SK-N-SH (cell line): ENCODE measurements at regions of chr3 and their contacts with region 1.

Region 1: DNA sequence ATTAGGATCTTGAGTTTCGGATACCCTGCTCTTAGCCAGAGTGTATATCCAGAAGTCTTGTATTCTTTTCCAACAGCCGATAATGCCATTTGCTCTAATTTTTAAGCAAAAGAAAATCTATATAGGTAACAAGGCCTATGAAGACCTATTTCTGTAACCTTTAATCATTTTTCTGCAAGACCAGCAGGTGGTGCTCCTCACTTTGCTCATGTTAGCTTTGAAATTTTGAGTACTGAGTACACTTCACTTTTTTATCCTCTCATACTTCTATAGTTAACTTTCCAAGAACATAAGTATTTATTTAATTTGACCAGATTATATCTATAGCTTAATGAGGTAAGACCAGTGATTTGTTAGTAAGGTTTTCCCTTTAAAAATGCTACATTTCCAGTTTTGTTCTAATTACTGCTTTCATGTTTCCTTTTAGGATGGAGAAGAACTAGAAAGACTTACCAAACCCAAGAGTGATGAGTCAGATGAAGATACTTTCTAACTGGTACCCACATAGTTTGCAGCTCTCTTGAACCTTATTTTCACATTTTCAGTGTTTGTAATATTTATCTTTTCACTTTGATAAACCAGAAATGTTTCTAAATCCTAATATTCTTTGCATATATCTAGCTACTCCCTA is 20.5 kb downstream of the SLC35A5 start:
- DNase-seq: peak; percentile 14
- H3K4me3 ChIP-seq: no peak overlapping the region; a peak in 1 of 4 replicates
- H3K27ac ChIP-seq: no peak overlapping the region; a peak in 1 of 4 replicates
- H3K4me1 ChIP-seq: no peaks in the 10 kb centered on the region
- H3K27me3 ChIP-seq: no peaks in the 10 kb centered on the region
- CTCF ChIP-seq: peak; percentile 85
- EP300 ChIP-seq: no peak
- RAD21 ChIP-seq: peak; percentile 86

Region 2: DNA sequence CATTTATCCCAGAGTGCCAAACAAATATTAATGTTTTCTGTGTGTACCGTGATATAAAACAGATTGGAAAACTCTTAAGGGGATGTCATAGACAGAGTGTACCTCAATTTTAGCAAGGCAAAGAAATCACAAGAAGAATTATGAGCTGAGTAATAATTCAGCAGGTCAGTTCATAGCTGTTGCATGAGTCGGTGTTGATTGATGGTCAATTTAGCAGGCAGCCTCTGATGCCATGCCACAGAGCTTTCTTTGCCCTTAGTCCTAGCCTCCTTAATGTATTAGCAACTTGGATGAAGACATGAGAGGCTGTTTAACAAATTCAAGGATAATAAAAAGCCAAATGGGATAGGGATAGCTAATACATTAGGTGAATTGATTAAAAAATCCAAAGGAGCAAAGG is 13.7 kb before region 1 on chr3:
- CTCF ChIA-PET with region 1: interaction called, 18 read pairs
- POLR2A ChIA-PET with region 1: no interaction called
- DNase-seq: no peak
- H3K4me3 ChIP-seq: no peak overlapping the region
- H3K27ac ChIP-seq: no peak overlapping the region
- H3K4me1 ChIP-seq: no peaks in the 10 kb centered on the region; a peak in 1 of 4 replicates
- H3K27me3 ChIP-seq: no peaks in the 10 kb centered on the region
- CTCF ChIP-seq: no peak
- EP300 ChIP-seq: peak in 1 of 2 experiments; percentile 8; a peak in 1 of 4 replicates
- RAD21 ChIP-seq: no peak

Region 3: DNA sequence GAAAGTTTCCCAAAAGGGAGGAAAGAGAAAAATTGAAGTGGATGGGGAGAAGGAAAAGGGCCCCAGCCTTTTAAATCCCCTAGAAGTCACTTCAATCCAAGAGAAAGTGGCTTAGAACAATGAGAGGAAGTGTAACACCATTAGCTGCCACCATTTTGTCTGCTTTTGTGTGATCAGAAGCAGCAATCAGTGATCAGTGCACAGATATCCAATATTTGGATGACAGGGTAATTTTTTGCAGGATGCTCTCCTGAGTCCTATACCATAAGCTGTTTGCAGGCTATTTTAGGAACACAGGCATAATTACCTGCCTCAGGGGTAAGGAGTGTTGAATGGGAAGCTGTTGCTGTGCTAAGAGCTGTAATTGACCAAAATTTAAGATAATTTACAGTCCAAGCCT is 10.9 kb after region 1 on chr3:
- CTCF ChIA-PET with region 1: interaction called, 13 read pairs
- POLR2A ChIA-PET with region 1: no interaction called
- DNase-seq: peak; percentile 16
- H3K4me3 ChIP-seq: no peak overlapping the region
- H3K27ac ChIP-seq: peak overlapping the region in 1 of 2 experiments; percentile 64; a peak in 1 of 4 replicates
- H3K4me1 ChIP-seq: no peaks in the 10 kb centered on the region; a peak in 1 of 4 replicates
- H3K27me3 ChIP-seq: no peaks in the 10 kb centered on the region
- CTCF ChIP-seq: no peak
- EP300 ChIP-seq: no peak; a peak in 1 of 4 replicates
- RAD21 ChIP-seq: no peak

Region 4: GRCh38 chr3:112635671-112636070 is 53.3 kb after region 1 on chr3:
- CTCF ChIA-PET with region 1: interaction called, 31 read pairs
- POLR2A ChIA-PET with region 1: no interaction called
- DNase-seq: peak; percentile 58
- H3K4me3 ChIP-seq: peak overlapping the region; percentile 60 to 77; a peak in 3 of 4 replicates
- H3K27ac ChIP-seq: peak overlapping the region; percentile 92 to 96
- H3K4me1 ChIP-seq: peaks cover 35 to 45% of the 10 kb centered on the region in 2 experiments; a peak in 3 of 4 replicates
- H3K27me3 ChIP-seq: no peaks in the 10 kb centered on the region
- CTCF ChIP-seq: peak; percentile 32; the same call in 1 of the 2 replicates
- EP300 ChIP-seq: peak in 1 of 2 experiments; percentile 71; a peak in 2 of 4 replicates
- RAD21 ChIP-seq: no peak

Region 5: DNA sequence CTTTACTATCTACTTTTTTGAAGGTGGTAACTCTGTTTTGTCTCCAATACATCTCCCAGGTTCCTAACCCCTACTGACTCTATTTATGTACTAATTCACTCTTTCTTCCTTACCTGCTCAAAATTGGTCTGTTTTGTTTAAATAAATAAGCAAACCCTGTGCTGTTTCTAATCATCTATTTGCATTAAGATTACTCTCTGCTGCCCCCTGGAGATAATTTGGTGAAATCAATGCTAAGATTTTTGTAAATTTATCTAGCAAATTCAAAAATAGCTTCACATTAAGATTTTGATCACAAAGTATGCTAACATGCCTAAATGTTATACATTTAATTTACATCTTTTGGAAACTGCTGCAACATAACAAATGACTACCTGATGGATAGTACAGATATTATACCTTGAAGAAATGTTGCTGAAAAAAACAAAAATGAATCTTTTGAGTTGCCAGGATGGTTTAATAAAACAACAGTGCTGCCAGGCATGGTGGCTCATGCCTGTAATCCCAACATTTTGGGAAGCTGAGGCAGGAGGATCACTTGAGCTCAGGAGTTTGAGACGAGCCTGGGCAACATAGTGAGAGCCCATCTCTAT is 397.0 kb after region 1 on chr3:
- CTCF ChIA-PET with region 1: interaction called, 38 read pairs
- POLR2A ChIA-PET with region 1: no interaction called
- DNase-seq: peak; percentile 16
- H3K4me3 ChIP-seq: no peak overlapping the region; a peak in 1 of 4 replicates
- H3K27ac ChIP-seq: no peak overlapping the region
- H3K4me1 ChIP-seq: no peaks in the 10 kb centered on the region; a peak in 1 of 4 replicates
- H3K27me3 ChIP-seq: no peaks in the 10 kb centered on the region
- CTCF ChIP-seq: peak; percentile 84
- EP300 ChIP-seq: no peak
- RAD21 ChIP-seq: peak; percentile 77

Region 6: DNA sequence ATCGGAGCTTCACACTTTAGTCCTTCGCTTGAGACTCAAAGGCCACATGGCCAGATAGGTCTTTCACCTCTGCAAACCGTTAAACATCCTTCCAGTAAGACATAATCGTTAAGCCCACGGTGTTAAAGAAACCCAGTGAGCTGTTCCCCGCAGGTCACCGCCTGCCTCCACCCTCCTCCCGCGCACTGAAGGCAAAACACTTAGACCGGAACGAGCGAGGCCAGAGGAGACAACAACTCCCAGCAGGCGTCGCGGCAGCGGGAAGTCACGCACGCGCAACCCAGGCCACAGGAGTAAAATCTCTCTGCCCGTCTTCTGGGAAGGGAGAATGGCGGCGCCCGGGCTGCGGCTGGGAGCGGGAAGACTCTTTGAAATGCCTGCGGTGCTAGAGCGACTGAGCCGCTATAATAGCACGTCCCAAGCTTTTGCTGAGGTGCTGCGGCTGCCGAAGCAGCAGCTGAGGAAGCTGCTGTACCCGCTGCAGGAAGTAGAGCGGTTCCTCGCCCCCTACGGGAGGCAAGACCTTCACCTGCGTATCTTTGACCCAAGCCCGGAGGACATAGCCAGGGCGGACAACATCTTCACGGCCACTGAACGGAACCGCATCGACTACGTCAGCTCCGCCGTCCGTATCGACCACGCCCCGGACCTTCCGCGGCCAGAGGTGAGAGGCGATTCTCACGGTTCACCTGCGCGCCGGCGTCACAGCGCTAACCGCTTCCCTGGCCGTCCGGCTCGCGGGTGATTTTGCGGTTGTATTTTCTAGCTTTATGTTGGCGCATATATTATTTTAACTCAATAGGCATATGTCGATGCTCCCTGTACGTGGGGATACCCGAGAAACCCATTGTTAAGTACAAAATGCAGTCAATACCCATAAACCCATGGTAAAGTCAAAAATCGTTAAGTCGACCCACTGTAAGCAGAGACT is 408.6 kb after region 1 on chr3 and contains the start of gene GTPBP8:
- CTCF ChIA-PET with region 1: interaction called, 12 read pairs
- POLR2A ChIA-PET with region 1: no interaction called
- DNase-seq: peak; percentile 87
- H3K4me3 ChIP-seq: peak within 1 kb of the TSS; percentile 82 to 88
- H3K27ac ChIP-seq: peak within 1 kb of the TSS; percentile 88 to 99
- H3K4me1 ChIP-seq: peaks cover 9 to 12% of the 10 kb centered on the region in 2 experiments; a peak in 3 of 4 replicates
- H3K27me3 ChIP-seq: no peaks in the 10 kb centered on the region
- CTCF ChIP-seq: peak; percentile 25; the same call in 1 of the 2 replicates
- EP300 ChIP-seq: no peak
- RAD21 ChIP-seq: 0 out of 2 replicates have a peak, but pooled peaks have one; percentile 15
- polyA plus RNA-seq, gene GTPBP8: 19.2 and 20.1 TPM in 2 replicates